ENCODE measurements at regions of chr14 and their contacts with region 1.

Region 1: GRCh38 chr14:55026793-55027561 is at the starts of genes SOCS4 and WDHD1:
- DNase-seq: peak; percentile 99
- ATAC-seq: peak; percentile 92
- H3K4me3 Mint-ChIP-seq: peak within 1 kb of the TSS; percentile 95
- H3K27ac Mint-ChIP-seq: peak within 1 kb of the TSS; percentile 92
- H3K4me1 Mint-ChIP-seq: peaks cover 50% of the 10 kb centered on the region
- H3K27me3 Mint-ChIP-seq: no peaks in the 10 kb centered on the region
- CTCF ChIP-seq: no peak
- total RNA-seq, gene SOCS4: 29.2 and 30.3 TPM in 2 replicates
- total RNA-seq, gene WDHD1: 9.3 and 9.5 TPM in 2 replicates

Region 2: DNA sequence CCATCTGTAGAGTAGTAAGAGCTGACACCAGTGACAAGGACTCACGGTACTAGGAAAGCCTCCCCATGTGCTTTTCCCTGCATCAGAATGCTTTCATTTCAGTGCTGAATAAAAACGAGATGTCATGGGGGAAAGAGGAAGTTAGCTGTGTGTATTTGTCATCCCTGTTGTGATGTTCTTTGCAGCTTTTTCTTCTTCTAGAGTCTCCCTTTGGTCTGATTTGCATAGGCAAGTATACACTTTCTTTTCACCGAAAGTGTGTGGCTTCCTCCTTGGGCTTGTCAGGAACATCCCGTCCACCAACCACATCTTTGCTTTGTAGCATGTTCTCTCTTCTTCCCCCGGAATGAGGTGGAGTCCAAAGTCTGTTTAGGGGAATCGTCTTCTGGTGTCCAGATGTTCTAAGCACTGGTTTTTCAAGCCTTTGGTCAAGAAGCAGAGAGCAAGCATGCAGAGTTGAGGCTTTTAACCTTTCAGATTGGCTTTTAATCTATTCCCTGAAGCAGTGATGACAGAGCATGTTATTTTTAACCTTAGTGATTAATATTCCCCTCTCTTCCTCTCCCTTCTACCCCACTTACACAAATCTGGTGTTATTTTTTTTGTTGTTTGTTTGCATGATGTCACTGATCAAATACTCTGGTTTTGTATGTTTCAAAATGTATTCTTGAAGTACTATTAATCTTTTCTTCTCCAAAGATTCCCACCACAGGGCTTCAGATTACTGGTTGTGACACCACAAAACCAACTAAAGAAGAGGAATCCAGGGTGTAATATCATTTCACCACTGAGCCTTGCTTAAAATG is 296.6 kb before region 1 on chr14:
- CTCF ChIA-PET with region 1: no interaction called
- POLR2A ChIA-PET with region 1: no interaction called
- intact Hi-C with region 1: loop called (anchors 1 kb)
- DNase-seq: no peak
- ATAC-seq: peak; percentile 90
- H3K4me3 Mint-ChIP-seq: peak overlapping the region; percentile 78
- H3K27ac Mint-ChIP-seq: peak overlapping the region; percentile 88
- H3K4me1 Mint-ChIP-seq: peaks cover 22% of the 10 kb centered on the region
- H3K27me3 Mint-ChIP-seq: no peaks in the 10 kb centered on the region
- CTCF ChIP-seq: no peak